ENCODE measurements at regions of chr4 and their contacts with region 1.

Region 1: GRCh38 chr4:10704430-10704810 is 19.9 kb upstream of the CLNK start:
- DNase-seq: no peak
- H3K4me3 ChIP-seq: no peak overlapping the region
- CTCF ChIP-seq: no peak

Region 2: DNA sequence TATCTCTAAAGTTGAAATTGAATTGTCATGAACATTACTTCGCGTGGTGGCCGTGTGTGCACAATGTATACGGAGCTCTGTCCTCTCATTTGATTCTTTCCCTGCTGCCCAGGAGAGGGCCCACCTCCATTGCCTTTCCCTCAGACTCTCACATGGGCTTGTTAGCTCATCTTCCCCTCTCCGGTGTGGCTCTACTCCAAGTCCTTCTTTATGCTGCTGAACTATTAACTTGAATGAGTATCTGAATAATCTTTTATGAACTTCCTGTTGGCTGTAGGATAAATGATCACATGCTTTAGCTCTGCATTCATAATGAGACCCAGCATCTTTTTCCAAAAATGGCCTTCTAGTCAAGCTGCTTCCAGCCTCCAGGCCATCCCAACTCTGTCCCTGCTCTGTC is 48.9 kb after region 1 on chr4:
- in situ Hi-C with region 1: loop called (anchors 5 kb)
- DNase-seq: no peak
- H3K4me3 ChIP-seq: no peak overlapping the region
- CTCF ChIP-seq: no peak

Region 3: GRCh38 chr4:11098461-11098860 is 394.0 kb after region 1 on chr4:
- in situ Hi-C with region 1: no loop called
- DNase-seq: no peak
- H3K4me3 ChIP-seq: no peak overlapping the region
- CTCF ChIP-seq: no peak

Measured in astrocyte of the cerebellum (primary cell).